Activated CD4-positive, alpha-beta memory T cell treated with anti-CD3 and anti-CD28 coated beads for 36 hours (primary cell): ENCODE measurements at regions of chr13 and their contacts with region 1.

Region 1: GRCh38 chr13:106619688-106620555 is 52.0 kb upstream of the ARGLU1 start:
- DNase-seq: peak; percentile 28
- H3K4me3 Mint-ChIP-seq: no peak overlapping the region
- H3K27ac Mint-ChIP-seq: no peak overlapping the region
- H3K4me1 Mint-ChIP-seq: peaks cover 2% of the 10 kb centered on the region
- H3K27me3 Mint-ChIP-seq: peaks cover 12% of the 10 kb centered on the region

Region 2: DNA sequence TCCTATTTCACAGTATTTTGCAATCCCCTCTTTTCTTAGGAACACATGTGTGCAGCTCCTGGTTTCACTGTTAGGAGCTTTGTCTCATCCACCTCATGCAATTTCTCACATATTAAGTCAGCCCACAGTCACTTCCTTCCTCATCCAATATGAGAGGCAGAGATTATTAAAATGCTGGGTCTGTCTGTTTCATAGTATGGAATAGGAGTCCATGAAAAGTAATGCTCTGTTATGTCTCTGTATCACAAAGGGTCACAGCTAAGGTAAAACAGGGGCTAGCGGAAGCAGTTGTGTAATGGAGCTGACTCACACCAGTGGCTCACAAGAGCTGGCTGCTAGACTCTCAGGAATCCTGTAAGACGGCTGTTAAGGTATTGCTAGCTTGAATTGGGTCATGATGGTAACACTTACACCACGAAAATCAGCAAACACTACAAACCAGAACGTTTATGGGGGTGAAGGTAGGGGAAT is 300.9 kb before region 1 on chr13:
- CTCF ChIA-PET with region 1: no interaction called
- POLR2A ChIA-PET with region 1: no interaction called
- intact Hi-C with region 1: no loop called
- DNase-seq: no peak
- H3K4me3 Mint-ChIP-seq: no peak overlapping the region
- H3K27ac Mint-ChIP-seq: no peak overlapping the region
- H3K4me1 Mint-ChIP-seq: no peaks in the 10 kb centered on the region
- H3K27me3 Mint-ChIP-seq: peaks cover 2% of the 10 kb centered on the region

Region 3: DNA sequence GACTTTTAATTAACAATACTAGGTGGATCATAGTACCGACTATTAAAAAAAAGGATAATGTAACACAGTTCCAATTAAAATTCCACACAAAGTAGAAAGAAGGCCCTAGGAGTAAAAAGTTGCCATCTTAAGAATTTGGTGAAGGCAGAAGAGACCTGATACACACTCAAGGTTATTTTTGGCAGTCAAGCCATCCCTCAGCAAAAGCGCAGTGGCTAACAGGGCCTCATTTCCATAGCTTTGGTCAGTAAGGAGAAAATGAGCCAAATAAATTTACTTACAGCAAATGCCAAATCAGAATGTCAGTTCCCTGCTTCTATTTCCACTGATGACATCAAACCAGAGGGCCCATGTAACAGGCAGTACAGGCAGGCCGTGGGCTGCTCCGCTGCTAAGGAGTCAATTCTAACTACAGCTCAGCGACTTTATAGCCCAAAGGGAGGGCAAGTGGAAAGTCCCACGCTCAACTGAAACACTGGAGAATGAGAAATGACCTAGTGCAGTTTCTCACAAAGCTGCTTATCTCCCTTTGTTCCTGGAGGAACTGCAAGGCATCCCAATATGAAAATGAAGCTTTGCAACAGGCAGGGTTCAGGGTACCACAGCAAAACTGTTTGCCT is 58.3 kb before region 1 on chr13:
- CTCF ChIA-PET with region 1: interaction called, 12 read pairs
- POLR2A ChIA-PET with region 1: no interaction called
- intact Hi-C with region 1: no loop called
- DNase-seq: peak; percentile 82
- H3K4me3 Mint-ChIP-seq: peak overlapping the region; percentile 16
- H3K27ac Mint-ChIP-seq: peak overlapping the region; percentile 77
- H3K4me1 Mint-ChIP-seq: peaks cover 67% of the 10 kb centered on the region
- H3K27me3 Mint-ChIP-seq: no peaks in the 10 kb centered on the region

Region 4: DNA sequence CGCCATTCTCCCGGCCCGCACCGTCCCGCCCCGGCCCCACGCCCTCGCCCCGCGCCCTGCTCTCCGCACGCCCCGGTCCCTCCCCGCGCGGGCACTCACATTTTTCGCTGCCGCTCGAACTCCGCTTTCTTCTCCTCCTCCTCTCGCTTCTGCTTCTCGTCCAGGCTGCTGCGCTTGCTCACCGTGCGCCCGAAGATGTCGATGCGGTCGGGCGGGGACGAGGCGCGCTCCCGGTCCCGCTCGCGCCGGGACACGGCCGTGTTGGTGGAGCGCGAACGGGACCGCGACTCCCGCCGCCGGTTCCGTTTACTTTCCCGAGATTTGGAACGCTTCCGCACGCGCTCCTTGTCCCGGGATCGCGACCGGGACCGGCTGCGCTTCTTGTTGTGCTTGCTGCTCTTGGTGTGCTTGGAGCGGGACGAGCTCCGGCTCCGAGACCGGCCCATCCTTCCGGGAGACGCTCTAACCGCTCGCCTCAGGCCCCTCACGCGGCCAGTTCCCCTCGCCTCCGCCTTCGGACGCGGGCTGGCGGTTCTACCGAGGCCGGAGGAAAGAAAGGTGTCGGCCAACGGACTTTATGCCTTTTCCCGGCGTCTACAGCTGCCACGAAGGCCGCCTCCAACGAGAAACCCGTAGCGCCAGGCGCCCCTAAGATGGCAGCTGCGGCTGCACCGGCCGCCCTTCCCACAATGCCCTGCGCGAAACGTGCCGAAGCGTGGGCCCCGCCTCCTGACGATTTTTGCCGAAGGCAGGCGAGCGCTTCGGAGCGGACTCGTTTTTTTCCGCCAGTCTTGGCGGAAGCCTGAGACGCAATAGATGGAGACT is 52.2 kb before region 1 on chr13 and contains the start of gene ARGLU1:
- CTCF ChIA-PET with region 1: interaction called, 12 read pairs
- POLR2A ChIA-PET with region 1: no interaction called
- intact Hi-C with region 1: loop called (anchors 2 kb)
- DNase-seq: peak; percentile 97
- H3K4me3 Mint-ChIP-seq: peak within 1 kb of the TSS; percentile 98
- H3K27ac Mint-ChIP-seq: peak within 1 kb of the TSS; percentile 97
- H3K4me1 Mint-ChIP-seq: peaks cover 48% of the 10 kb centered on the region
- H3K27me3 Mint-ChIP-seq: no peaks in the 10 kb centered on the region
- total RNA-seq, gene ARGLU1: 81.0 to 87.1 TPM

Region 5: DNA sequence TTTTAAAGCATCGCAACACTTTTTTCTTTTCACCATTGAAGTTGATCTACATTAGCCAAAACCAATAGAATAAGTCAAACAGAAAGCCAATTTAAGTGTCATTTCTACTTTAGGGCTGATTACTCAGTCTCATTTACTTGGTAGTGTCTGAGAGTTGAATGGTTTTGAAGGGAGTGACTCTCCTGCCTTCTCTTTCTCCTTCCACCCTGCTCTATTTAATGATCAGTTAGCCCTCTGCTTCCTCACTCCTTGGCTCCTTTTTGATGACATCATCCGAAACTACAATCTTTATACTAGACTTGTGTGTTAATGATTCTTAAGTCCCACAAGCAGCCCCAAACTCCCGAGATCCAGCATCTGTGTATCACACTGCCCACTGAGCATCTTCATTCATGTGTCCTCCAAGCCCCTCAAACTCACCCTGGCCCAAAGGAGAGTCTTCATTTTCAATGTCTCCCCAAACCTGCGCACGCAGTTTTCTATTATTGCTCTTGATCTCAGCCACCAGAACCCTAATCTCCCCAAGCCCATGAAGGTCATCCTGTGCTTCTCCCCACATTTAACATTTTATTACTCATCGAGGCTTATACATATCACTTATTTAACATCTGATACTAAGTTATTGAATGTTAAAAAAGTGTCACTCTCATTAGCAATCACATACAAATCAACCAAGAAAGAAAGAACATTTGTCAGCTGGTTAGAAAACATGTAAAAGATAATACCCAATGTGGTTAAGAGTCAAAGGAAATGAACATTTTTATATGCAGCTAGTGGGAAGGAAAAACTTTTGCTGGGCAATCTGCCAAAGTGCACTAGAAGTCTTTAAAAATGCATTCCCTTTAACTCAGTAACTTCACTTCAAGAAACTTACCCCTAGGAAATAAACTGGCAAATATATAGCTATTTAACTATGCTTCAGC is 19.8 kb before region 1 on chr13:
- CTCF ChIA-PET with region 1: interaction called, 10 read pairs
- POLR2A ChIA-PET with region 1: no interaction called
- intact Hi-C with region 1: no loop called
- DNase-seq: no peak
- H3K4me3 Mint-ChIP-seq: no peak overlapping the region
- H3K27ac Mint-ChIP-seq: no peak overlapping the region
- H3K4me1 Mint-ChIP-seq: peaks cover 11% of the 10 kb centered on the region
- H3K27me3 Mint-ChIP-seq: peaks cover 15% of the 10 kb centered on the region

Region 6: GRCh38 chr13:106917673-106918556 is 298.0 kb after region 1 on chr13:
- CTCF ChIA-PET with region 1: interaction called, 3 read pairs
- POLR2A ChIA-PET with region 1: no interaction called
- intact Hi-C with region 1: loop called (anchors 5 kb)
- DNase-seq: peak; percentile 82
- H3K4me3 Mint-ChIP-seq: peak overlapping the region; percentile 75
- H3K27ac Mint-ChIP-seq: no peak overlapping the region
- H3K4me1 Mint-ChIP-seq: peaks cover 8% of the 10 kb centered on the region
- H3K27me3 Mint-ChIP-seq: peaks cover 24% of the 10 kb centered on the region